ENCODE measurements at regions of chrX and their contacts with region 1.

Region 1: GRCh38 chrX:1453951-1454785 is 1.5 kb upstream of the ASMTL start:
- DNase-seq: peak; percentile 86 to 91
- ATAC-seq: peak; percentile 10 to 54 (median 30)
- H3K4me3 ChIP-seq: peak overlapping the region in 9 of 10 donors; percentile 32 to 87 (median 60)
- H3K27ac ChIP-seq: peak overlapping the region in 8 of 10 donors; percentile 39 to 70 (median 62)
- H3K4me1 ChIP-seq: peaks cover 5 to 24% (median 12%) of the 10 kb centered on the region in 9 donors
- H3K27me3 ChIP-seq: no peaks in the 10 kb centered on the region
- CTCF ChIP-seq: peak; percentile 97 to 99 (median 97)

Region 2: GRCh38 chrX:1391707-1392375 is 62.3 kb before region 1 on chrX and contains the start of gene SLC25A6:
- intact Hi-C with region 1: loop called in 6 of 10 experiments (anchors 2 to 10 kb)
- DNase-seq: peak; percentile 99 to 100
- ATAC-seq: peak; percentile 93 to 97 (median 96)
- H3K4me3 ChIP-seq: peak within 1 kb of the TSS; percentile 75 to 100 (median 97)
- H3K27ac ChIP-seq: peak within 1 kb of the TSS; percentile 86 to 100 (median 99)
- H3K4me1 ChIP-seq: peaks cover 18 to 65% (median 42%) of the 10 kb centered on the region in 9 donors
- H3K27me3 ChIP-seq: no peaks in the 10 kb centered on the region
- CTCF ChIP-seq: peak in 5 of 9 donors; percentile 20 to 42 (median 28)
- total RNA-seq, gene SLC25A6: 128 to 186 (median 141) TPM

Region 3: GRCh38 chrX:1420371-1420770 is 33.8 kb before region 1 on chrX:
- intact Hi-C with region 1: no loop called
- DNase-seq: no peak
- ATAC-seq: peak in 2 of 8 donors; percentile 11 to 22
- H3K4me3 ChIP-seq: no peak overlapping the region
- H3K27ac ChIP-seq: no peak overlapping the region
- H3K4me1 ChIP-seq: no peaks in the 10 kb centered on the region
- H3K27me3 ChIP-seq: no peaks in the 10 kb centered on the region
- CTCF ChIP-seq: no peak

Region 4: GRCh38 chrX:1591102-1591900 is 137.1 kb after region 1 on chrX and contains the start of gene AKAP17A:
- intact Hi-C with region 1: loop called in 5 of 10 experiments (anchors 5 to 10 kb)
- DNase-seq: peak; percentile 94 to 97
- ATAC-seq: peak; percentile 95 to 98 (median 97)
- H3K4me3 ChIP-seq: peak within 1 kb of the TSS; percentile 67 to 88 (median 76)
- H3K27ac ChIP-seq: peak within 1 kb of the TSS; percentile 62 to 94 (median 90)
- H3K4me1 ChIP-seq: peaks cover 0 to 34% (median 18%) of the 10 kb centered on the region in 9 donors
- H3K27me3 ChIP-seq: no peaks in the 10 kb centered on the region
- CTCF ChIP-seq: peak in 4 of 9 donors; percentile 10 to 47 (median 29)
- total RNA-seq, gene AKAP17A: 12.2 to 20.3 (median 15.8) TPM

Region 5: DNA sequence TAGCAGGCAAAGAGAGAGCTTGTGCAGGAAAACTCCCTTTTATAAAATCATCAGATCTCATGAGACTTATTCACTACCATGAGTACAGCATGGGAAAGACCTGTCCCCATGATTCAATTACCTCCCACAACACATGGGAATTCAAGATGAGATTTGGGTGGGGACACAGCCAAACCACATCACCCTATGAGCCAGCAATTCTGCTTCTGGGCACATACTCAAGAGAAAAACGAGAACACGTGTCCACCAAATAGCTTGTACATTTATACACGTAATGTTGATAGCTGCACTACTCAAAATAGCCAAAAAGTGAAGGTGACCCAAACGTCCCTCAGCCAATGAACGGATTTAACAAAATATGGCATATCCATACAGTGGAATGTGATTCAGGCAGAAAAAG is 1141.1 kb after region 1 on chrX:
- intact Hi-C with region 1: loop called in 3 of 10 experiments (anchors 10 kb)
- DNase-seq: no peak
- ATAC-seq: peak in 1 of 8 donors; percentile 12
- H3K4me3 ChIP-seq: no peak overlapping the region
- H3K27ac ChIP-seq: no peak overlapping the region
- H3K4me1 ChIP-seq: peaks cover 0 to 11% (median 0%) of the 10 kb centered on the region in 9 donors
- H3K27me3 ChIP-seq: no peaks in the 10 kb centered on the region
- CTCF ChIP-seq: no peak

Region 6: GRCh38 chrX:2819345-2820135 is 1365.4 kb after region 1 on chrX:
- intact Hi-C with region 1: loop called in 2 of 10 experiments (anchors 10 kb)
- DNase-seq: no peak
- ATAC-seq: no peak
- H3K4me3 ChIP-seq: no peak overlapping the region
- H3K27ac ChIP-seq: no peak overlapping the region
- H3K4me1 ChIP-seq: no peaks in the 10 kb centered on the region
- H3K27me3 ChIP-seq: peaks cover 0 to 27% (median 0%) of the 10 kb centered on the region in 7 donors
- CTCF ChIP-seq: peak in 8 of 9 donors; percentile 13 to 59 (median 48)